Cardiac septum (tissue), 1 donor: ENCODE measurements at regions of chr4 and their contacts with region 1.

Region 1: GRCh38 chr4:148441986-148442831 is at the start of gene NR3C2:
- DNase-seq: peak; percentile 99
- total RNA-seq, gene NR3C2: 17.3 TPM

Region 2: DNA sequence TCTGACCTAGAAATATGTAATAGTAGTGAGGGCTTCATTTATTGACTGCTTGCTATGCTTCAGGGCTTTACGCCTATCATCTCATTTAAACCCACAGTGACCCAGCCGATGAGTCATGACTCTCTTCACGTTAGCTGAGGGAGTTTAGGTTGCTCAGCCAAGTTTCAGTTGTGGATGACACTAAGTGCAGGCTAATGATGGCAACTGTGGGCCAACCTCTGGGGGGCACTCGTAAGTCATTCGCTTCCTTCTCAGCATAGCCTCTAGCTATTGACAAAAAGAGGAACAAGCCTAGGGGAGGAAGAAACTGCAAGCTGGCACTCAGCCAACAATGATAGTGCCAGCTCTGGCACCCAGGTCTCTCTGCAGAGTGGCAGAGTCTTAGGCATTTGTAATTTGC is 385.3 kb before region 1 on chr4:
- intact Hi-C with region 1: loop called (anchors 5 kb)
- DNase-seq: no peak

Region 3: DNA sequence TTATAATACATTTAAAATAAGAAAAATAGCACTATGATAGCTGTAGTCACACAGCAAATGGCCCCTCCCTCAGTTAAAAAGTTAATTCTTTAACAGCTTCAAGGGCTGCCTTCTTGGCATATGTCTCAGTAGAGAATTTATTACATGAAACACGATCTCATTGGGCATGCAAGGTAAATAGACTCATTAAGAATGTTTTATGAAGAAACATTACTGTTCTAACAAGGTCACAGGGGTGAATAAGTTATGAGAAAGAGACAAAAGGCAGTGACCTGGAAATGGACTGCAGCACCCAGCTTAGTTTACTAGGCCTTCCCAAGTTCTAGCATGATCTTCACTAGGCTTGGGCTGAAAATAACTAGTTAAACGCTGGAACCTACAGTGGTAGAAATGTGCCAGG is 277.7 kb before region 1 on chr4:
- intact Hi-C with region 1: loop called (anchors 5 kb)
- DNase-seq: no peak

Region 4: GRCh38 chr4:148288448-148288847 is 153.8 kb before region 1 on chr4:
- intact Hi-C with region 1: loop called (anchors 5 kb)
- DNase-seq: no peak

Region 5: GRCh38 chr4:148344352-148344751 is 97.9 kb before region 1 on chr4:
- intact Hi-C with region 1: loop called (anchors 10 kb)
- DNase-seq: no peak